Activated CD4-positive, alpha-beta memory T cell treated with anti-CD3 and anti-CD28 coated beads, Interleukin-2, amount 10 ng/mL, durations not matched to agents 7 days and 5 days (primary cell): ENCODE measurements at regions of chr10 and their contacts with region 1.

Region 1: DNA sequence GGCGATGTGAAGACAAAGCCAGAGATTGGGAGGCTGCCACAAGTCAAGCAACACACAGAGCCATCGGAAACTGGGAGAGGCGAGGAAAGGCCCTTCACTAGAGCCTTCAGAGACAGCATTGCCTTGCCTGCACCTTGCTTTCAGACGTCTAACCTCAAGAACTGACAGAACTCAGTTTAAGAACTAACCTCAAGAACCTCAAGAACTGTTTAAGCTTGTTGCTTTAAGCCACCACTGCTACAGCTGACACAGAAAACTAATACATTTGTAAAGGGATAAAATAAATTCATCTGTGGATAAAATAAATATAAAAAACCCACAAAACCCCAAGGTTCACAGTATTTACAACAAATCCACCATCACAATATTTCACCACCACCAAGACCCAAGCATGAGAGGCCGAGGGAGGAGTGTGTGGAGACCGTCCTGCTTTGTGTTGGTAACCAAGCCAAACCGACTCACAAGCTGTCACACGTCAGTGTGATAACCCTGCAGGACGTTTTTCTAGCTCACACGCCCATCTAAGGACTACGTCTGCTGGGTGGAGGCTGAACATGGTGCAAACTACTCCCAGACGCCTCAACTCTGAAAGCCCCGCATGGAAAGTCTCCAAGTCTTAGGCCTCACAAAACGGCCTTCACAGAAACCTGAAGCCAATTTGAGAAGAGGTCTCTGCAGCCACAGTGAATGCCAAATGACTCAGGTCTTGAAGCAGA is 116.8 kb downstream of the ABLIM1 start:
- DNase-seq: peak; percentile 83
- H3K4me3 Mint-ChIP-seq: peak overlapping the region; percentile 52
- H3K27ac Mint-ChIP-seq: peak overlapping the region; percentile 98
- H3K4me1 Mint-ChIP-seq: peaks cover 91% of the 10 kb centered on the region
- H3K27me3 Mint-ChIP-seq: no peaks in the 10 kb centered on the region

Region 2: GRCh38 chr10:114442136-114442535 is 99.1 kb before region 1 on chr10:
- CTCF ChIA-PET with region 1: no interaction called
- POLR2A ChIA-PET with region 1: no interaction called
- DNase-seq: no peak
- H3K4me3 Mint-ChIP-seq: no peak overlapping the region
- H3K27ac Mint-ChIP-seq: no peak overlapping the region
- H3K4me1 Mint-ChIP-seq: no peaks in the 10 kb centered on the region
- H3K27me3 Mint-ChIP-seq: no peaks in the 10 kb centered on the region

Region 3: GRCh38 chr10:114486938-114487814 is 54.1 kb before region 1 on chr10:
- CTCF ChIA-PET with region 1: interaction called, 10 read pairs
- POLR2A ChIA-PET with region 1: interaction called, 5 read pairs
- DNase-seq: no peak
- H3K4me3 Mint-ChIP-seq: no peak overlapping the region
- H3K27ac Mint-ChIP-seq: peak overlapping the region; percentile 33
- H3K4me1 Mint-ChIP-seq: peaks cover 32% of the 10 kb centered on the region
- H3K27me3 Mint-ChIP-seq: no peaks in the 10 kb centered on the region

Region 4: GRCh38 chr10:114499630-114500190 is 41.5 kb before region 1 on chr10:
- CTCF ChIA-PET with region 1: interaction called, 10 read pairs
- POLR2A ChIA-PET with region 1: interaction called, 74 read pairs
- DNase-seq: peak; percentile 66
- H3K4me3 Mint-ChIP-seq: peak overlapping the region; percentile 23
- H3K27ac Mint-ChIP-seq: peak overlapping the region; percentile 90
- H3K4me1 Mint-ChIP-seq: peaks cover 78% of the 10 kb centered on the region
- H3K27me3 Mint-ChIP-seq: no peaks in the 10 kb centered on the region

Region 5: GRCh38 chr10:114526504-114527238 is 14.6 kb before region 1 on chr10:
- CTCF ChIA-PET with region 1: interaction called, 93 read pairs
- POLR2A ChIA-PET with region 1: interaction called, 211 read pairs
- DNase-seq: peak; percentile 91
- H3K4me3 Mint-ChIP-seq: peak overlapping the region; percentile 86
- H3K27ac Mint-ChIP-seq: peak overlapping the region; percentile 92
- H3K4me1 Mint-ChIP-seq: peaks cover 52% of the 10 kb centered on the region
- H3K27me3 Mint-ChIP-seq: no peaks in the 10 kb centered on the region

Region 6: DNA sequence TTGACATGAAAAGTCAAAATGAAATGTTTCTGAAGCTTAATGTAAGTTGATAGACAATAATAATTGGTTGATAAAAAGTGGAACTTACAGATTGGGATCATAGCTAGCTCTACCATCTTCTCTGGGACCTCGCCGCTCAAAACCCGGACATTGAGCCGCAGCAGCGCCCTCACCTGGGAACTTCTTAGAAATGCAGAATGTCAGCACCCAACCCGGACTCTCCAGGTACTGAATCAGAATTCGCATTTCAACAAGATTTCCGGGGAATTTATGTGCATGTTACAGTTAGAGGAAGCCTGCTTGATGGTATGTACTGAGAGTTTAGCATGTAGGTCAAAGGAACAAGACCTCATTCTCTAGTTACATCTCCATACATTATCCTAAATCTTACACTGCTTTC is 153.5 kb after region 1 on chr10:
- CTCF ChIA-PET with region 1: interaction called, 10 read pairs
- POLR2A ChIA-PET with region 1: no interaction called
- DNase-seq: peak; percentile 37
- H3K4me3 Mint-ChIP-seq: no peak overlapping the region
- H3K27ac Mint-ChIP-seq: no peak overlapping the region
- H3K4me1 Mint-ChIP-seq: peaks cover 13% of the 10 kb centered on the region
- H3K27me3 Mint-ChIP-seq: peaks cover 22% of the 10 kb centered on the region

Region 7: DNA sequence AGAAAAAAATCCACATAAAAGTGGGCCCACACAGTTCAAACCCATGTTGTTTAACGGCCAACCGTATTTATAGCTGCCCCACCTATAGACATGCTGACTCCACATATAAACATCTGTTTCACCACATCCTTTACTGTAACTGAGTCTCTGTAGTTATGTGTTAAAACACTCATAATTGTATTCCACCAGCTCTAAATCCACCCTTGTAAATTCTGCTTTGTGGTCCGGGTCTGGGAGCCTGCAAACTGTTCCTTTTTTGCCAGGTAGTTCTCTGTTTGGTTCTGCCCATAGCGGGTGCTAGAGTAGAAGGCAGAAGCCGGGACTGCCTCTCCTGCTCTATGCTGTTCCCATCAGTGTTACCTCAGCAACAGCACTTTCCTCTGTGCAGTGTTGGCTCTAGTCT is 260.2 kb after region 1 on chr10:
- CTCF ChIA-PET with region 1: interaction called, 3 read pairs
- POLR2A ChIA-PET with region 1: interaction called, 10 read pairs
- DNase-seq: peak; percentile 56
- H3K4me3 Mint-ChIP-seq: peak overlapping the region; percentile 80
- H3K27ac Mint-ChIP-seq: peak overlapping the region; percentile 94
- H3K4me1 Mint-ChIP-seq: peaks cover 41% of the 10 kb centered on the region
- H3K27me3 Mint-ChIP-seq: no peaks in the 10 kb centered on the region